CD8-positive, alpha-beta T cell (primary cell): ENCODE measurements at regions of chr2 and their contacts with region 1.

Region 1: GRCh38 chr2:151409601-151410484 is at the start of gene RIF1:
- DNase-seq: peak; percentile 46 to 84 (median 70)
- ATAC-seq: peak; percentile 87
- H3K4me3 ChIP-seq: peak within 1 kb of the TSS; percentile 76 to 80
- H3K4me3 Mint-ChIP-seq: peak within 1 kb of the TSS; percentile 98
- H3K27ac ChIP-seq: peak within 1 kb of the TSS; percentile 78 to 79
- H3K27ac Mint-ChIP-seq: peak within 1 kb of the TSS; percentile 98
- H3K4me1 ChIP-seq: peaks cover 12% of the 10 kb centered on the region
- H3K4me1 Mint-ChIP-seq: peaks cover 34% of the 10 kb centered on the region
- H3K27me3 ChIP-seq: no peaks in the 10 kb centered on the region
- H3K27me3 Mint-ChIP-seq: no peaks in the 10 kb centered on the region
- CTCF ChIP-seq: peak; percentile 56
- total RNA-seq, gene RIF1: 51.6 to 53.1 TPM

Region 2: GRCh38 chr2:151261231-151261976 is 148.4 kb before region 1 on chr2 and contains the start of gene RBM43:
- CTCF ChIA-PET with region 1: no interaction called
- POLR2A ChIA-PET with region 1: interaction called, 5 read pairs
- intact Hi-C with region 1: loop called in 1 of 2 experiments (anchors 1 kb)
- DNase-seq: peak; percentile 60 to 94 (median 82)
- ATAC-seq: peak; percentile 87
- H3K4me3 ChIP-seq: peak within 1 kb of the TSS; percentile 68
- H3K4me3 Mint-ChIP-seq: peak within 1 kb of the TSS; percentile 90
- H3K27ac ChIP-seq: peak within 1 kb of the TSS; percentile 91 to 96
- H3K27ac Mint-ChIP-seq: peak within 1 kb of the TSS; percentile 98
- H3K4me1 ChIP-seq: peaks cover 5% of the 10 kb centered on the region
- H3K4me1 Mint-ChIP-seq: peaks cover 38% of the 10 kb centered on the region
- H3K27me3 ChIP-seq: no peaks in the 10 kb centered on the region
- H3K27me3 Mint-ChIP-seq: no peaks in the 10 kb centered on the region
- CTCF ChIP-seq: no peak
- total RNA-seq, gene RBM43: 12.1 to 12.4 TPM

Region 3: DNA sequence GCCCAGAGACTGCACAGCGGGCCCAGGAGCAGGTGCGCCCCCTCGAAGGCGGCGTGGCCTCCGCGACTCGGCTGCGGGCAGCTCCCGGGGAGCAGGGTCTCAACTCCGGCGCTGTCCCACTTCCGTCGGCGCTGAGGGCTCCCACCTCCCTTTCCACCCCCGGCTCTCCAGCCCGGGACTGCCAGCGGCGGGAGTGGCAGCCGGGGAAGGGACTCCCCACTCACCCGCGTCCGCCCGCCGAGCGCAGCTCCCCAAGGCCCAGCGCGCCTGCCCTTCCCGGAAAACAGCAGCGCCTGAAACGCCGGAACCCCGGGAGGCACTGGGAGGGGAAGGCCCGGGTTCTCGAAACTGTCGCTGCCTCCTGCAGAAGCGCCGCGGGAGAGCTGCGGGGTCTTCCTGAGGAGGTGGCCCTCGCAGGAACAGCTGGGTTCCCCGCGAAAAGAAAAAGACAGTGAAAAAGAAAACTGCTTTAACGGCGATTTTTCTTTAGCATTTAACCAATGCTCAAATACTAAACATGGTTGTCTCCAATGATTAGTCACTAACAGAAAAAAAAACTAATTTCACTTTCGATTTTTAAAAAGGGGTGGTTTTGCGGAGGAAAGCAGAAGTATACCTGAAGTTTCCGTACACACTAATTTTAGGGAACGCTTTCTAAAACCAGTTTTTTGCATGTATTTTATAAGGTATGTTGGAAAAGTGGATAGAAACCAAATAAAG is 120.3 kb before region 1 on chr2 and contains the start of gene NMI:
- CTCF ChIA-PET with region 1: interaction called, 3 read pairs
- POLR2A ChIA-PET with region 1: interaction called, 7 read pairs
- intact Hi-C with region 1: loop called (anchors 1 to 2 kb)
- DNase-seq: peak; percentile 30 to 82 (median 64)
- ATAC-seq: peak; percentile 68
- H3K4me3 ChIP-seq: peak within 1 kb of the TSS; percentile 89 to 92
- H3K4me3 Mint-ChIP-seq: peak within 1 kb of the TSS; percentile 95
- H3K27ac ChIP-seq: peak within 1 kb of the TSS; percentile 92 to 97
- H3K27ac Mint-ChIP-seq: peak within 1 kb of the TSS; percentile 99
- H3K4me1 ChIP-seq: peaks cover 31% of the 10 kb centered on the region
- H3K4me1 Mint-ChIP-seq: peaks cover 46% of the 10 kb centered on the region
- H3K27me3 ChIP-seq: no peaks in the 10 kb centered on the region
- H3K27me3 Mint-ChIP-seq: no peaks in the 10 kb centered on the region
- CTCF ChIP-seq: no peak
- total RNA-seq, gene NMI: 16.9 to 18.0 TPM

Region 4: DNA sequence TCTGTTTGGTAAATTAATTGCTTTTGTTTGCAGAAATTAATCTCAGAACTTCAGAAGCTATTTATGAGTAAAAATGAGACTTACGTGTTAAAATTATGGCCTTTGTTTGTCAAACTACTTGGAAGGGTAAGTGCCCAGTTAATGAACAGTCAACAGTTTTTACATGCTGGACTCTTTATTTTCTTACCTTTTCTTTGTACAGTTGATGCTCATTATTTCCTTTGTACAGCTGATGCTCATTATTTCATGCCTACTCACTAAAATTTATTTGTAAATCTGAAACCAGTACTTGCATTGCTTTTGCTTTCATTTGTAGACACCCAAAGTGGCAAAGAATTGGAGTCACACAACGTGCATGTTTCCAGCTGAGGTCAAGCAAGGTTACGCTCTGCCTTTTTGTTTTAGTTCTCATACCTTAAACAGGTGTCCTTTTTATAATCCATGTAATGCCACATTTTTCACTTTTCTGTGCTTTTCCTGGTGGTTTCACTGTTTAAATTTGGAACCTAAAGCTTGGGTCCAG is 13.1 kb after region 1 on chr2:
- CTCF ChIA-PET with region 1: interaction called, 7 read pairs
- POLR2A ChIA-PET with region 1: no interaction called
- intact Hi-C with region 1: loop called (anchors 1 kb)
- DNase-seq: peak in 1 of 9 experiments; percentile 9
- ATAC-seq: no peak
- H3K4me3 ChIP-seq: no peak overlapping the region
- H3K4me3 Mint-ChIP-seq: no peak overlapping the region
- H3K27ac ChIP-seq: peak overlapping the region; percentile 9 to 44
- H3K27ac Mint-ChIP-seq: peak overlapping the region; percentile 92
- H3K4me1 ChIP-seq: peaks cover 10% of the 10 kb centered on the region
- H3K4me1 Mint-ChIP-seq: peaks cover 35% of the 10 kb centered on the region
- H3K27me3 ChIP-seq: no peaks in the 10 kb centered on the region
- H3K27me3 Mint-ChIP-seq: no peaks in the 10 kb centered on the region
- CTCF ChIP-seq: no peak